Mammary epithelial cell (primary cell): ENCODE measurements at regions of chr10 and their contacts with region 1.

Region 1: GRCh38 chr10:60099998-60100747 is 193.8 kb upstream of the CCDC6 start:
- DNase-seq: peak; percentile 23
- H3K4me3 ChIP-seq: no peak overlapping the region
- H3K27ac ChIP-seq: no peak overlapping the region
- H3K4me1 ChIP-seq: no peaks in the 10 kb centered on the region
- H3K27me3 ChIP-seq: no peaks in the 10 kb centered on the region
- CTCF ChIP-seq: peak; percentile 43 to 59

Region 2: DNA sequence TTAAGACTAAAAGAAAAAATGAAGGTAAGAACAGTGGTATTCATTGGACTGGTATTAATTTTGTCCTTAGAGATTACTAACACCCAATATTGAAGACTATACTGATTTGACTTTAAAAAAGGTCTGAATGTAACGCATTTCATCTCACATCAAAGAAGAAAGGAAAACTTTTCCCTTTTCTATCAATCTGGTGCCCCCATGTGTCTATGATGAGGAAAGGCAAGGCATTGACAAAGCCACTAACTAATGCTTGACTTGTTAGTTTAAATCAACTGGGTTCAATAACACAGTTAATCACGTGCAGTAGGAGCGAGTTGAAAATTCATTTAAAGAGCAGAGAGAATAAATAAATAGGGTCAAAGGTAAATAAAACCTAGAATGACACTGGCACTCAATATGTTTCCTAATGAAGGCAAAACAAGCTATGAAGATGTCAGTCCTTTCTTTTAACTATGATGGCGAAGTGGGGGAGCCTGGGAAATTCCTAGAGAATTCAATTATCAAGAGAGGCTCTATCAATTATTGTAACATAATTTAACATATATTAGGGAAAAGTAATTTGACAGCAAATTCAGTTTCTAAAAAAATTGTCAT is 108.6 kb after region 1 on chr10:
- CTCF ChIA-PET with region 1: interaction called, 5 read pairs
- dilution Hi-C with region 1: no loop called
- in situ Hi-C with region 1: loop called in 1 of 2 experiments (anchors 10 kb)
- intact Hi-C with region 1: loop called (anchors 1 kb)
- DNase-seq: peak; percentile 21
- H3K4me3 ChIP-seq: no peak overlapping the region
- H3K27ac ChIP-seq: no peak overlapping the region
- H3K4me1 ChIP-seq: peaks cover 3% of the 10 kb centered on the region
- H3K27me3 ChIP-seq: no peaks in the 10 kb centered on the region
- CTCF ChIP-seq: peak; percentile 79 to 81

Region 3: DNA sequence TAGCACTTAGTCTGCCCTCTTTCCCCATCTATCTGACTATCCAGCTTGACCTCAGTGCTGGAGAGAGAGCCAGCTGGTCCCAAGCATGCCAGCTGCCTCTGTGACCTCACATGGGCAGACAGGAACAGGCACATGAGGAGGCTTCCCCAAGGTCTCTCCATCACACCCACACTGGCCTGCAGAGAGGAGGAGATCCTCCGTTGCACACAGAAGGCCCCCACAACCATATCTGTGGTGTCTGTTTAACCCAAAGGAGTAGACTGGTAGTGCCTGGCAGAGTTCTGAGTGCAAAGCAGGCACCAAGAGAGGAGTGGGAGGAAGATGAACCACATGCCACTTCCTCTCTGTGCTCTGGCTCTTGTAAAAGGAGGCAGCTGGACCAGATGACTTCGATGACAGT is 294.3 kb after region 1 on chr10:
- CTCF ChIA-PET with region 1: no interaction called
- dilution Hi-C with region 1: no loop called
- in situ Hi-C with region 1: no loop called
- intact Hi-C with region 1: no loop called
- DNase-seq: no peak
- H3K4me3 ChIP-seq: no peak overlapping the region
- H3K27ac ChIP-seq: no peak overlapping the region
- H3K4me1 ChIP-seq: peaks cover 16% of the 10 kb centered on the region
- H3K27me3 ChIP-seq: no peaks in the 10 kb centered on the region
- CTCF ChIP-seq: no peak

Region 4: GRCh38 chr10:60614363-60614762 is 514.2 kb after region 1 on chr10:
- CTCF ChIA-PET with region 1: interaction called, 13 read pairs
- dilution Hi-C with region 1: no loop called
- in situ Hi-C with region 1: no loop called
- intact Hi-C with region 1: no loop called
- DNase-seq: no peak
- H3K4me3 ChIP-seq: no peak overlapping the region
- H3K27ac ChIP-seq: no peak overlapping the region
- H3K4me1 ChIP-seq: peaks cover 16% of the 10 kb centered on the region
- H3K27me3 ChIP-seq: no peaks in the 10 kb centered on the region
- CTCF ChIP-seq: no peak

Region 5: DNA sequence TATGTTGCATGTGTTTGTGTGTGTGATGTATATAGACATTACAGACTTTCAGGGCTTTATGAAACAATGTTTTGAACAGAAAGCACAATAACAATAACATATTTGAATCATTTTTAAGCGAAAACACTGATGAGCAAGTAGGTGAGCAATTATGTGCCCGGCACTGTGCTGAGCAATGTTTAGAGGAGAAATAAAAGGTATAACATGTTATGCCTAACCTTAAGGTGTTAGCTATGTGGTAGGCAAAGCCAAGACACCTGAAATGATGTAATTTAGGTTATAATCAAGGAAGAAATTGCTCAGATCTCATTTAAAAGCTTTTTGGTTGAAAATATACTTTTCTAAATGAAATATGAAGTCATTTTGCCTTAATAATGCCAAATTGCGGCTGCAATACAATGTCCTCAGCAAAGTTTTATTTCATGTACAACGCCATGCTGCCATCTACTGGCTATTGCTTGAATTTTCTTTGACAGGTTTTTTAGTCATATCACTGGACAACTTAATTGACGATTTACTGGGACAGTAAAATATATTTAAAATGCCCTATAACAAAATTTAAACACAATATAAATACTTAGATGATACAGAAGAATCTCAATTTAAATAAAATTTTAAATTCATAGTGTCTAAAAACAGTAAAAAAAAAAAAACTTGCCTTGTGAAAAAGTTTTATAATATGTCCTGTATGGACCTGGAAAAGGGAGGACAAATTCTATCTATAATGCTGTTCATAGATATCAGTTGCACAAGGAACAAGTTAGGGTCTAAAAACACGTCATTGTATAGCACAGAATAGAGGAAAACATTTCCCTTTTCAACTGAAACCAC is 547.0 kb after region 1 on chr10:
- CTCF ChIA-PET with region 1: no interaction called
- dilution Hi-C with region 1: no loop called
- in situ Hi-C with region 1: loop called (anchors 25 kb)
- intact Hi-C with region 1: no loop called
- DNase-seq: peak; percentile 31
- H3K4me3 ChIP-seq: no peak overlapping the region
- H3K27ac ChIP-seq: no peak overlapping the region
- H3K4me1 ChIP-seq: no peaks in the 10 kb centered on the region
- H3K27me3 ChIP-seq: no peaks in the 10 kb centered on the region
- CTCF ChIP-seq: peak; percentile 60 to 71